Mammary epithelial cell (primary cell): ENCODE measurements at regions of chr11 and their contacts with region 1.

Region 1: DNA sequence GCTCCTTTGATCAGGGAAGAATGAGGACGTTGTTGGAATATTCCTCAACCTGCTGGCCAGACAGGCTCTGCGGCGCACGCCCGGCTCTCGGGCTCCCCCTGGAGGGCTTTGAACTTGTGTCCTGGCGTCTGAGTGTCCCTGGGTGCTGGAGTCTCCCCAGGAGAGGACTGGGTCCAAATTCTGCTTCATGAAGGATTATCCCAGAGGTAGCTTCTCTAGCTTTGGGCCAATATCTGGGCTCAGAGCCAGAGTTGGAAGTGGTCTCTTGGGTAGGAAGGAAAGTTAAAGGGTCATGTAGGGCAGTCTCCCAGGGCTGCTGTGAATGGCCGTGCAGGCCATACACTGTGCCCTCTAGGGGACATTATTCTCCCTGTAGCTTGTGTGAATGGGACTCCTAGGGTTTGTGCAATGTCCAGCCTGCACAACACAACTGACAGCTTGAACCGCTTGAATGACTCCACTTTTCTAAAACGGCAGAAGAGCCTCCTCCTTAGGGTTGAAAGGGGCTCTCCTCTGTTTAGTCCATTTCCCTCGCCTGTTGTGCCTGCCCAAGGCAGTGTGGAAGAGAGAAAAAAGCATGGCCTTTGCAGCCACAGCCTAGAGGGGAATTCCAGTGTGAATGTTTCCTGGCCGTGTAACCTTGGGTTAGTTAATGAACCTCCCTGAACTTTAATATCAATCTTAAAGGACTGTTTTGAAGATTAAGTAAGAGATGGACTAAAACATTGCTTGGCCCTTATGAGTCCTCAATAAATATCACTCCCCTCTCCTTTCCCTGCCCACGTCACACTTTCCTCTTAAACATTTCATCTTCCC is 111.2 kb upstream of the THY1 start:
- DNase-seq: peak; percentile 57
- H3K4me3 ChIP-seq: no peak overlapping the region
- H3K27ac ChIP-seq: no peak overlapping the region
- H3K4me1 ChIP-seq: no peaks in the 10 kb centered on the region
- H3K27me3 ChIP-seq: peaks cover 1% of the 10 kb centered on the region
- CTCF ChIP-seq: peak; percentile 62 to 95

Region 2: GRCh38 chr11:119572481-119573424 is 38.6 kb after region 1 on chr11:
- CTCF ChIA-PET with region 1: interaction called, 5 read pairs
- dilution Hi-C with region 1: loop called (anchors 5 kb)
- in situ Hi-C with region 1: no loop called
- intact Hi-C with region 1: no loop called
- DNase-seq: peak; percentile 87
- H3K4me3 ChIP-seq: no peak overlapping the region
- H3K27ac ChIP-seq: peak overlapping the region; percentile 18
- H3K4me1 ChIP-seq: peaks cover 13% of the 10 kb centered on the region
- H3K27me3 ChIP-seq: no peaks in the 10 kb centered on the region
- CTCF ChIP-seq: no peak